ENCODE measurements at regions of chr11 and their contacts with region 1.

Region 1: DNA sequence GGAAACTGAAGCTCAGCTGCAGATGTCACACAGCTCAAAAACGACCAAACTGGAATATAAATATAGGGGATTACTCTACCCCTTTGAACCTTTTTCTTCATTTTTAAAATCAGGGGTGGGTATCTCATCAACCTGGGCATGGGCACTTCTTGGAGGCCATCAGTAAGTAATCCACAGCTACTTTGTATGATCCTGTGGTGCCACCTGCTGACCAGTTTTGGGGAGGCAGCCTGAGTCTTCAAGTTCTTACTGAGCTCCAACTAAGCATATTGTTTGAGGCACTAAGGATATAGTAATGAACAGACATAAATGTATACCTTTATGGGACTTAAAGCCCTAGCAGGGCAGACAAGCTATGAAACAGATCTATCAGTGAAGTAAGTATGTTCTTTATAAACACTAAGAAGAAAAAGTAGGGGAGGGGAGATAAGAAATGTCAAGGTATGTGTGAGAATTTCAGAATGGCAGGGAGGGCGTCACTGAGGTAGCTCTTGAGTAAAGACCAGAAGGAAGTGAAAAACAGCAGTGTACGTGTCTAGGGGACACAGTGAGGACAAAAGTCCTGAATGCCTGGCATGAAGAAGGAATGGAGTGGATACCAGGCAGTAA is 18.4 kb downstream of the TUB start:
- DNase-seq: peak; percentile 80
- H3K4me3 Mint-ChIP-seq: no peak overlapping the region
- H3K27ac Mint-ChIP-seq: no peak overlapping the region
- H3K4me1 Mint-ChIP-seq: no peaks in the 10 kb centered on the region
- H3K27me3 Mint-ChIP-seq: no peaks in the 10 kb centered on the region

Region 2: GRCh38 chr11:8006349-8006977 is 92.9 kb before region 1 on chr11:
- CTCF ChIA-PET with region 1: interaction called, 437 read pairs
- POLR2A ChIA-PET with region 1: interaction called, 6 read pairs
- intact Hi-C with region 1: loop called (anchors 1 kb)
- DNase-seq: peak; percentile 59
- H3K4me3 Mint-ChIP-seq: no peak overlapping the region
- H3K27ac Mint-ChIP-seq: no peak overlapping the region
- H3K4me1 Mint-ChIP-seq: peaks cover 5% of the 10 kb centered on the region
- H3K27me3 Mint-ChIP-seq: peaks cover 1% of the 10 kb centered on the region

Region 3: DNA sequence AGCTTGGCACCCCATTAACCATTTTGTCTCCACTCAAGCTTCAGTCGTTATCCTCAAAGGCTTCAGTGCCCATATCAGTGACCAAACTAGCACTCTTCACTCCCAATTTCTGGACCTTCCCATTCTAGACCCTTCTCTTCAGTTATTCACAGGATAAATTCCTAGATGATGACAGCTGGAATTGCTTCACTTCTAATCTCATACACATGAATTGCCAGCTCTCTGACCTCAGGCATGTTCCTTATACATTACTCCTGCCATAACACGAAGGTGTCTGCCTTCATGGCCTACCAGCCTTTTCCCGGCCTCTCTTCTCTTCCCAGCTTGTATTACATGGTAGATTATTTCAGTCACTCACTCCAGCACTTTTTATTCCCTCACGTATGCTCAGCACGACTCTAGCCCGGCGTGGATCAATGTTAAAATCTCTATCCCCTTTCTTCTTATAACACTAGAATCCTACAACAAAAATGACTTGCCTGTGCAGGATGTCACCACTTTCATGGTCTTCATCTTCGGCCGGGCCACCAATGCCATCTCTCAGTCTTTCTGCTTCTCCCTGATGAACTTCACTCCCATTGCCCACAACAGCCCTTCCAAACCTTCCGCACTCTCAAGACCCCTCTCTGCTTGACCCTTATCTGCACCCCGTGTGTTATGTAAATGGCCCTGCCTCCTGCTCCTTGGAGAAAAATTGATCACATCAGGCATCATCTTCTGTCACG is 75.4 kb before region 1 on chr11:
- CTCF ChIA-PET with region 1: interaction called, 21 read pairs
- POLR2A ChIA-PET with region 1: no interaction called
- intact Hi-C with region 1: no loop called
- DNase-seq: no peak
- H3K4me3 Mint-ChIP-seq: no peak overlapping the region
- H3K27ac Mint-ChIP-seq: no peak overlapping the region
- H3K4me1 Mint-ChIP-seq: peaks cover 8% of the 10 kb centered on the region
- H3K27me3 Mint-ChIP-seq: peaks cover 13% of the 10 kb centered on the region

Region 4: DNA sequence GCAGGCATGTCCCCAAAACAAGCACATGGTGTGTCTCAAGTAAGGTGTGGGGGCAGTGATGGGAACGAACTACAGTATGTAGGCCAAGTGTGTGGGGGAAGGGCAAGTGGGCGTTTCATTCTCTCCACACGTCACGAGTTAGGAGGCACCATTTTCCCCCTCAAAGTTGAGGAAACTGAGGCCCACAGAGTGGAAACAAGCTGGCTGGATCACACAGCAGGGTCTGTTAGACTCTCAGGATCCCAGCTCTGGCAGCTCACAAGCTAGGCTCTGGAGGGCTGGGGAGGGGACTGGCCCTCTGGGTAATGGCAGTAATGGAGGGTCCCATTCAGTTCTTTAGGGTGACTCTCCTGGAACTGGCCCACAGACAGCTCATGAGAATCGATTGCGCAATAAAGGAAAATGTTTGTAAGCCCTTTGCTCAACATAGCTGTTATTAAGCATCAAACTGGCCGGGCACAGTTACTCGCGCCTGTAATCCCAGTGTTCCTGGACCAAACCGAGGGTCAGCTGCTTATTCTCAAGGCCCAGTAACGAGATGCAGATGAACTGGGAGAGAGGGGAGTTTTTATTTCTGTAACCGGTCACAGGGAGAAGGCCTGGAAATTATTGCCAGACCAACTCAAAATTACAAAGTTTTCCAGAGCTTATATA is 42.5 kb before region 1 on chr11:
- CTCF ChIA-PET with region 1: interaction called, 12 read pairs
- POLR2A ChIA-PET with region 1: no interaction called
- intact Hi-C with region 1: no loop called
- DNase-seq: no peak
- H3K4me3 Mint-ChIP-seq: no peak overlapping the region
- H3K27ac Mint-ChIP-seq: no peak overlapping the region
- H3K4me1 Mint-ChIP-seq: no peaks in the 10 kb centered on the region
- H3K27me3 Mint-ChIP-seq: no peaks in the 10 kb centered on the region

Region 5: GRCh38 chr11:8080674-8081590 is 18.5 kb before region 1 on chr11 and contains the start of gene TUB:
- CTCF ChIA-PET with region 1: interaction called, 105 read pairs
- POLR2A ChIA-PET with region 1: no interaction called
- intact Hi-C with region 1: no loop called
- DNase-seq: peak; percentile 13
- H3K4me3 Mint-ChIP-seq: peak within 1 kb of the TSS; percentile 50
- H3K27ac Mint-ChIP-seq: no peak within 1 kb of the TSS
- H3K4me1 Mint-ChIP-seq: peaks cover 9% of the 10 kb centered on the region
- H3K27me3 Mint-ChIP-seq: peaks cover 40% of the 10 kb centered on the region
- total RNA-seq, gene TUB: 0.36 to 0.58 TPM